Left colon (tissue), 2 donors: ENCODE measurements at regions of chr5 and their contacts with region 1.

Region 1: GRCh38 chr5:42005561-42006153 is 80.6 kb downstream of the FBXO4 start:
- DNase-seq: no peak
- ATAC-seq: no peak

Region 2: DNA sequence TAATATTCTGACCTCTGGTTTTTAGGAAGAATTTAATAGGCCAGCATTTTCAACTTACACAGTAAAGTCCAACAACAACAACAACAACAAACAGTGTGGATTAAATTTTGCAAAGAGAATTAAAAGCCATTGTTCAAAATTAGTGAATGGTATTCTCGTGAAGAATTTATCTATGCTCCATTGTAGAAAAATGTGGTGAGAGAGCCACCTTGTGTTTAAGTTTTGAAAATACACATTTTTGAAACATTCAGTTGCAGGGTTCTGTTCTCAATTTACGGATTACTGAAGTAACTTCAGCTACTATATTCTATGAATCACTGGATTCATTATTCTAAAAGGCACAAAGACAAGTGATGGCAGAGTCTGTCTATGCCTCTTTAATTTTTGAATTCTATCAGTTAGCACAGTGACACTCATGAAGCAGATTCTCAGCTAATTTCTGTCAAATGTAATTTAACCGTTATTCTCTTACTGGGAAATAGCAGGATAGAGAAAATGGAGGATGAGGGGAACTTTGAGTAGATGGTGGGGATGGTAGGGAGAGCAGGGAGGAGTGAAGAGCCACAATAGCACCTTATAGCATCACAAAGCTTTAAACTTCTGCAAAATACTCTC is 761.9 kb after region 1 on chr5:
- intact Hi-C with region 1: loop called in 1 of 2 experiments (anchors 5 kb)
- DNase-seq: no peak
- ATAC-seq: peak; percentile 42